PC-9 (cell line): ENCODE measurements at regions of chr15 and their contacts with region 1.

Region 1: DNA sequence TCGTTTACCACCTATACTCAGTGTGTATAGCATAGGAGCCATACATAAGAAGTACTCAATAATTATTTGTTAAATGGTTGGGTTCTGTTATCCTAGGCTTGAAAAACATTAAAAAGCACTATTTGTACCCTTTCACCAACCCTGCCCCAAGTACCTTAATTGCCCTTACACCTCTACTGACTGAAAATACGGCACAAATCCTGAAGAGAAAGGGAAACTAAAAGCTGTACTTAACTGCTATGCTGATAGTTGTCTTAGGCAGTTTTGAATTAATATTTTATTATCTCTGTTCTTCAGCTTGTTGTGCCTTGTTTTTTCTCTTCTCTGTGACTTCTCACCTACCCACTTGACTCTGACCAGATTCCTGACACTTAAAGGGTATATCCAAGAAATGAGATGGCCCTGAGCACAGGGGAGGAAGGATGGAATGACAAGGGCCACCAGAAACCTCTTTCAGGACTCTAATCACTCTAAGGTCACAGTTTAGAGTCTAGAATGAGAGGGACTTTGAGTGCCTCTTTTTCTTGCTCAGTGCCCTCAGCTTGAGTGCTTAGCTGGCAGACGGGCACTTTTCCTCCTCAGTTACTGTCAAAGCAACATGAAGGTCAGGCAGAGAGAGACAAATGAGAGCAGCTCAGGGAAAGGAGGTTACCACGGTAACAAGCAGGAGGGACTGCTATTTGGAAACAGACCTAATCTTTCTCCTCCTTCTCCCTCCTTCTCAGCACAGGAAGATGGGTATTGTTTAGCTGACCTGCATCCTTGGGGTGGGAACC is 136.5 kb downstream of the ZNF609 start:
- DNase-seq: no peak
- H3K4me3 ChIP-seq: no peak overlapping the region
- H3K27ac ChIP-seq: no peak overlapping the region
- H3K4me1 ChIP-seq: no peaks in the 10 kb centered on the region
- H3K27me3 ChIP-seq: no peaks in the 10 kb centered on the region
- CTCF ChIP-seq: no peak

Region 2: DNA sequence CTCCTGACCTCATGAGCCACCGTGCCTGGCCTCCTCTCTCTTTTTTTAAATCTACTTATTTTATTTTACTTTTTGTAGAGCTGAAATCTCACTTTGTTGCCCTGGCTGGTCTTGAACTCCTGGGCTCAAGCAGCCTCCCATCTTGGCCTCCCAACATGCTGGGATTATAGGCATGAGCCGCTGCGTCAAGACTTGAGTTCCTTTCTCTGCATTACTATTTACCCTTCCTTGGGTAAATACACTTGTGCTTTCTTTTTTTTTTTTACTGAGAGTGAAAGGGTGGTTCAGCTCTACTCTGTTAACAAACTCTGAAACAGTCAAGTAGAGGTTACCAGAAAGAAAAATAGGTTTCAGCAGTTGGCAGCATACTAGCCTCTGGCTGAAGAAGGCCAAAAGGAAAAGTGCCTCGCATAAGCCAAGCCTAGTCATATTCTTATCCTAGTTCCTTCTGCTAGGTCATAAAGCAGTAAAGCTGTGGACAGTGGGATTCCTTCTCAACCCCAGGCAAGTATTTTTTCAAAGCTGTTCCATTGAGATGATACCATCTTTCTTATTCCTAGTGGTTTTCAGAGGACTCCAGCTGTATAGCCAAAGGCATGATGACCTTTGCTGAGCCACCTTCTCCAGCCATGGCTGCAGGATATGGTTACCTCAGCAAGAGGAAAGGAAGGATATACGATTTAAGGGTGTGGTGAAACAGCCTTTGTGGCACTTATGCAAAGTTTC is 43.4 kb after region 1 on chr15:
- CTCF ChIA-PET with region 1: no interaction called
- POLR2A ChIA-PET with region 1: interaction called, 10 read pairs
- intact Hi-C with region 1: no loop called
- DNase-seq: no peak
- H3K4me3 ChIP-seq: no peak overlapping the region
- H3K27ac ChIP-seq: no peak overlapping the region
- H3K4me1 ChIP-seq: no peaks in the 10 kb centered on the region
- H3K27me3 ChIP-seq: no peaks in the 10 kb centered on the region
- CTCF ChIP-seq: no peak

Region 3: GRCh38 chr15:64681424-64682024 is 84.6 kb after region 1 on chr15:
- CTCF ChIA-PET with region 1: no interaction called
- POLR2A ChIA-PET with region 1: no interaction called
- intact Hi-C with region 1: no loop called
- DNase-seq: peak; percentile 53 to 54
- H3K4me3 ChIP-seq: no peak overlapping the region
- H3K27ac ChIP-seq: no peak overlapping the region
- H3K4me1 ChIP-seq: no peaks in the 10 kb centered on the region
- H3K27me3 ChIP-seq: no peaks in the 10 kb centered on the region
- CTCF ChIP-seq: peak; percentile 66